ENCODE measurements at regions of chr9 and their contacts with region 1.

Region 1: GRCh38 chr9:22238809-22239684 is 207.6 kb upstream of the DMRTA1 start:
- DNase-seq: no peak
- ATAC-seq: peak; percentile 34
- H3K4me3 Mint-ChIP-seq: no peak overlapping the region
- H3K27ac Mint-ChIP-seq: no peak overlapping the region
- H3K4me1 Mint-ChIP-seq: peaks cover 37% of the 10 kb centered on the region
- H3K27me3 Mint-ChIP-seq: peaks cover 19% of the 10 kb centered on the region

Region 2: DNA sequence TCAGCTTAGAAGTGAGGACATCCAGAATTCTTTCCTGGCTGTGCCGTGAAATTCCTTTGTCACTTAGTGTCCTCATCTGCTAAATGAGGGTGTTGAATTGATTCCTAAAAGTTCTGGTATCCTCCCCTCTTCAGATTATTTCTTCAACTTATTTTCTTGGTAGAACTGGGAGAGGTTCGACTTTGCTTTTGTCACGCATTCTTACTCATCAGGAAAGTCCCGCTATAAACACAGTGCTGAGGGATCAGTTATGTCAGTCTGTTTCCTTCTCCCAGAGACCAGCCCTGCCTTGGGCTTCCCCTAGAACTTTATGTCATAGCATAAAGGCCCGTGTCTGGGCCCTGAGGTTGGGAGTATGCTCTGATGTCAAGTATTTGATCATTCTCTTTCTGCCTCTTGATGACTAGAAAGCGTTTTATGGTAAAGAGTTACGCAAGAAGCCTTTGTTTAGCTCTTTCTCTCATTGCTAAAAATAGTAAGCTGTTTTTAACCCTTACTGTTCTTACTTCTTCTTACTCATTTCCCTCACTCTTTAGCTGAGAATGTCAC is 407.0 kb before region 1 on chr9:
- CTCF ChIA-PET with region 1: no interaction called
- POLR2A ChIA-PET with region 1: no interaction called
- intact Hi-C with region 1: loop called in 1 of 2 experiments (anchors 5 kb)
- DNase-seq: peak; percentile 77
- ATAC-seq: peak; percentile 91
- H3K4me3 Mint-ChIP-seq: no peak overlapping the region
- H3K27ac Mint-ChIP-seq: peak overlapping the region; percentile 83
- H3K4me1 Mint-ChIP-seq: peaks cover 64% of the 10 kb centered on the region
- H3K27me3 Mint-ChIP-seq: no peaks in the 10 kb centered on the region

Region 3: DNA sequence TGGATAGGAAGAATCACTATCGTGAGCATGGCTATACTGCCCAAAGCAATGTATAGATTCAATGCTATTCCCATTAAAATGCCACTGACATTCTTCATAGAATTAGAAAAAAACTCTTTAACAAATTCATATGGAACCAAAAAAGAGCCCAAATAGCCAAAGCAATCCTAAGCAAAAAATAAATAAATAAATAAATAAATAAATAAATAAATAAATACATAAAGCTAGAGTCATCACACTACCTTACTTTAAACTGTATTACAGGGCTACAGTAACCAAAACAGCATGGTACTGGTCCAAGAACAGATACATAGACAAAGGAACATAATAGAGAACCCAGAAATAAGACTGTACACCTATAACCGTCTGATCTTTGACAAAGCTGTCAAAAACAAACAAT is 49.6 kb before region 1 on chr9:
- CTCF ChIA-PET with region 1: interaction called, 3 read pairs
- POLR2A ChIA-PET with region 1: no interaction called
- intact Hi-C with region 1: loop called in 1 of 2 experiments (anchors 5 kb)
- DNase-seq: no peak
- ATAC-seq: no peak
- H3K4me3 Mint-ChIP-seq: no peak overlapping the region
- H3K27ac Mint-ChIP-seq: no peak overlapping the region
- H3K4me1 Mint-ChIP-seq: no peaks in the 10 kb centered on the region
- H3K27me3 Mint-ChIP-seq: peaks cover 16% of the 10 kb centered on the region

Region 4: DNA sequence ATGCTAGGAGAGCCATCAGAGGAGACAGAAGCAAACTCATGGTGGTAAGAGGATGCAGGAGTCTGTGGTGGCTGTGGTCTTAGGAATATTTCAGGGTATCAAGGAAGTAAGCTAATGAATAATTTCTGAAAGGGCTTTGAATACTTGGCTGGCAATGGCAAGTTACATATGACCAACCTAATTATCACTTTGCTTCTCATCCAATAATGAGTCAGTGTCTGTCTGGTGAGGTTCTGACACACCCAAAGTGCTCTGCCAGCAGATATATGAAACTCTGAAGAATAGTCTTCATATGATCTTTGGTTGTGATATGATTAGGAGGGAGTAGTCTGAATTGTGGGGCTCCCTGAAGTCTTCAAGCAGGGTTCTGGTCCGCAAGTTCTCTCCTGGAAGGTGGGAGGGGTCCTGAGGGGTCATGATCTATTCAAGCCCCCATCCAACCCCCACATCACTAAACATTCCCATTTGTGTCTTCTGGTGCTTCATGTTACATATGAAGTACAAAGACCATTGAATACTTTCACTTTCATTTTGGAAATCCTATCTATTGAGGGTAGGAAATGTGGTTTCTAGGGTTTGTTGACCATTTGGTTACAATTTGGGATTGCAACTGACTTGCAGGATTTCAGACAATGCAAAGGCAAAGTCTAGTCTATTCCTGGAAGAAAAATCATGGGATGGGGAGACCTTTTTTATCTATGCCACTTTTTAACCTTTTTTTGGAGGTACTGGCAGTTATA is 30.0 kb before region 1 on chr9:
- CTCF ChIA-PET with region 1: interaction called, 3 read pairs
- POLR2A ChIA-PET with region 1: no interaction called
- intact Hi-C with region 1: loop called in 1 of 2 experiments (anchors 2 kb)
- DNase-seq: peak; percentile 25
- ATAC-seq: peak; percentile 92
- H3K4me3 Mint-ChIP-seq: no peak overlapping the region
- H3K27ac Mint-ChIP-seq: no peak overlapping the region
- H3K4me1 Mint-ChIP-seq: peaks cover 28% of the 10 kb centered on the region
- H3K27me3 Mint-ChIP-seq: peaks cover 5% of the 10 kb centered on the region

Region 5: DNA sequence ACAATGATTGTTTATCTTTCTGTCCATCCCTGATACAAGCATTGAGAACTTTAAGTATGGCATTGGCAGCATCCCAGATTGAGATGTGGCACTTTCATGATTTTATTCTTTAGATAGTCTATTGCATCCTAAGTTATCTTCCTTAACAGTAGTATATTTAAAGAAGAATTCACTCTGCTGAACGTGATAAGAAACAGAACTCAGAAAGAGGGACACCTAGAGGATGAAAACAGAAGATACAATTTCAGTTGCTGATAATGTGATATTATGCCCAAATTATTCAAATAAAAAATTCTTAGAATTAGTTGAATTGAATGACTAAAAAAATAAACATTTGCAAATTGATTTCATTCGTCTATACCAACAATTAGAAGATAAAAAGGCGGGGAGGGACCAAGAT is 10.5 kb before region 1 on chr9:
- CTCF ChIA-PET with region 1: no interaction called
- POLR2A ChIA-PET with region 1: no interaction called
- intact Hi-C with region 1: no loop called
- DNase-seq: no peak
- ATAC-seq: no peak
- H3K4me3 Mint-ChIP-seq: no peak overlapping the region
- H3K27ac Mint-ChIP-seq: no peak overlapping the region
- H3K4me1 Mint-ChIP-seq: no peaks in the 10 kb centered on the region
- H3K27me3 Mint-ChIP-seq: peaks cover 27% of the 10 kb centered on the region